Naive thymus-derived CD4-positive, alpha-beta T cell (primary cell): ENCODE measurements at regions of chr14 and their contacts with region 1.

Region 1: GRCh38 chr14:89767861-89768268 is 186.7 kb downstream of the EFCAB11 start:
- DNase-seq: peak; percentile 14 to 77 (median 66)
- ATAC-seq: peak; percentile 95
- H3K4me3 ChIP-seq: no peak overlapping the region
- H3K4me3 Mint-ChIP-seq: peak overlapping the region in 9 of 10 donors; percentile 39 to 79 (median 72)
- H3K27ac ChIP-seq: no peak overlapping the region
- H3K27ac Mint-ChIP-seq: peak overlapping the region; percentile 45 to 92 (median 85)
- H3K4me1 ChIP-seq: peaks cover 8 to 21% of the 10 kb centered on the region in 2 donors
- H3K4me1 Mint-ChIP-seq: peaks cover 24 to 60% (median 44%) of the 10 kb centered on the region in 7 donors
- H3K27me3 ChIP-seq: no peaks in the 10 kb centered on the region
- H3K27me3 Mint-ChIP-seq: peaks cover 0 to 10% (median 0%) of the 10 kb centered on the region in 5 donors

Region 2: GRCh38 chr14:89027097-89027740 is 740.6 kb before region 1 on chr14:
- CTCF ChIA-PET with region 1: no interaction called
- POLR2A ChIA-PET with region 1: no interaction called
- intact Hi-C with region 1: loop called (anchors 5 kb)
- DNase-seq: peak; percentile 32 to 76 (median 63)
- ATAC-seq: peak; percentile 92
- H3K4me3 ChIP-seq: peak overlapping the region; percentile 66
- H3K4me3 Mint-ChIP-seq: peak overlapping the region; percentile 65 to 79 (median 68)
- H3K27ac ChIP-seq: no peak overlapping the region
- H3K27ac Mint-ChIP-seq: no peak overlapping the region
- H3K4me1 ChIP-seq: peaks cover 4 to 5% of the 10 kb centered on the region in 2 donors
- H3K4me1 Mint-ChIP-seq: peaks cover 0 to 7% (median 0%) of the 10 kb centered on the region in 7 donors
- H3K27me3 ChIP-seq: peaks cover 0 to 15% of the 10 kb centered on the region in 2 donors
- H3K27me3 Mint-ChIP-seq: peaks cover 63 to 79% (median 67%) of the 10 kb centered on the region in 5 donors

Region 3: GRCh38 chr14:89178802-89179535 is 588.9 kb before region 1 on chr14:
- CTCF ChIA-PET with region 1: interaction called, 4 read pairs
- POLR2A ChIA-PET with region 1: no interaction called
- intact Hi-C with region 1: loop called (anchors 1 kb)
- DNase-seq: no peak
- ATAC-seq: no peak
- H3K4me3 ChIP-seq: no peak overlapping the region
- H3K4me3 Mint-ChIP-seq: no peak overlapping the region
- H3K27ac ChIP-seq: no peak overlapping the region
- H3K27ac Mint-ChIP-seq: peak overlapping the region in 6 of 9 donors; percentile 10 to 66 (median 26)
- H3K4me1 ChIP-seq: peaks cover 0 to 4% of the 10 kb centered on the region in 2 donors
- H3K4me1 Mint-ChIP-seq: peaks cover 5 to 44% (median 29%) of the 10 kb centered on the region in 7 donors
- H3K27me3 ChIP-seq: no peaks in the 10 kb centered on the region
- H3K27me3 Mint-ChIP-seq: no peaks in the 10 kb centered on the region

Region 4: DNA sequence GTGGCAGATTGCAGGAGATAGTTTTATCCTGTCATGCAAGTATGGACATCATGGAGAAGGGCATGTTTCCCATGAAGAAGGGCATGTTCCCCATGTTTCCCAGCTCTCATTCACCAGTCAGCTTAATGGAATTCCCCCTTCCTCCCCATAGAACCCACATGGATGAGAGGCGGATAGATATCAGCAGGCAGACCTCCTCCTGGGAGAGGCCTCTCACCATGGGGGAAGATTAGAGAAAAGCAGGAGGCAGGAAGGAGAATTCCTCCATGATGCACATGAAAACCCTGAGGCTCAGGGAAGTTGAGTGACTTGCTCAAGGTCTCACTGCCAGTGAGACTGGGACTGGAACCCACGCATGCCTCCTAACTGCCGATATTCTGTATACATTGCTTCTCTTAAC is 258.0 kb before region 1 on chr14:
- CTCF ChIA-PET with region 1: interaction called, 3 read pairs
- POLR2A ChIA-PET with region 1: no interaction called
- intact Hi-C with region 1: loop called in 1 of 2 experiments (anchors 1 kb)
- DNase-seq: no peak
- ATAC-seq: no peak
- H3K4me3 ChIP-seq: no peak overlapping the region
- H3K4me3 Mint-ChIP-seq: peak overlapping the region; percentile 75 to 89 (median 84)
- H3K27ac ChIP-seq: peak overlapping the region; percentile 52
- H3K27ac Mint-ChIP-seq: peak overlapping the region; percentile 90 to 96 (median 94)
- H3K4me1 ChIP-seq: peaks cover 18 to 25% of the 10 kb centered on the region in 2 donors
- H3K4me1 Mint-ChIP-seq: peaks cover 46 to 79% (median 65%) of the 10 kb centered on the region in 7 donors
- H3K27me3 ChIP-seq: no peaks in the 10 kb centered on the region
- H3K27me3 Mint-ChIP-seq: no peaks in the 10 kb centered on the region

Region 5: GRCh38 chr14:89701211-89702043 is 66.4 kb before region 1 on chr14:
- CTCF ChIA-PET with region 1: no interaction called
- POLR2A ChIA-PET with region 1: interaction called, 3 read pairs
- intact Hi-C with region 1: loop called (anchors 1 kb)
- DNase-seq: peak; percentile 67 to 88 (median 80)
- ATAC-seq: peak; percentile 95
- H3K4me3 ChIP-seq: peak overlapping the region; percentile 76
- H3K4me3 Mint-ChIP-seq: peak overlapping the region; percentile 73 to 93 (median 88)
- H3K27ac ChIP-seq: peak overlapping the region; percentile 69
- H3K27ac Mint-ChIP-seq: peak overlapping the region; percentile 75 to 98 (median 89)
- H3K4me1 ChIP-seq: peaks cover 12 to 23% of the 10 kb centered on the region in 2 donors
- H3K4me1 Mint-ChIP-seq: peaks cover 16 to 73% (median 59%) of the 10 kb centered on the region in 7 donors
- H3K27me3 ChIP-seq: no peaks in the 10 kb centered on the region
- H3K27me3 Mint-ChIP-seq: no peaks in the 10 kb centered on the region

Region 6: GRCh38 chr14:89915114-89915878 is 147.4 kb after region 1 on chr14:
- CTCF ChIA-PET with region 1: no interaction called
- POLR2A ChIA-PET with region 1: no interaction called
- intact Hi-C with region 1: loop called in 1 of 2 experiments (anchors 10 kb)
- DNase-seq: peak in 8 of 9 donors; percentile 22 to 65 (median 50)
- ATAC-seq: peak; percentile 65
- H3K4me3 ChIP-seq: no peak overlapping the region
- H3K4me3 Mint-ChIP-seq: no peak overlapping the region
- H3K27ac ChIP-seq: no peak overlapping the region
- H3K27ac Mint-ChIP-seq: no peak overlapping the region
- H3K4me1 ChIP-seq: peaks cover 0 to 4% of the 10 kb centered on the region in 2 donors
- H3K4me1 Mint-ChIP-seq: peaks cover 0 to 4% (median 3%) of the 10 kb centered on the region in 7 donors
- H3K27me3 ChIP-seq: no peaks in the 10 kb centered on the region
- H3K27me3 Mint-ChIP-seq: peaks cover 0 to 22% (median 11%) of the 10 kb centered on the region in 5 donors